CD8-positive, alpha-beta T cell (primary cell): ENCODE measurements at regions of chr19 and their contacts with region 1.

Region 1: GRCh38 chr19:39532233-39533002 is at the start of gene EID2B:
- DNase-seq: peak; percentile 83 to 98 (median 96)
- ATAC-seq: peak; percentile 98
- H3K4me3 ChIP-seq: peak within 1 kb of the TSS; percentile 77 to 93
- H3K4me3 Mint-ChIP-seq: peak within 1 kb of the TSS; percentile 93
- H3K27ac ChIP-seq: peak within 1 kb of the TSS; percentile 69 to 80
- H3K27ac Mint-ChIP-seq: peak within 1 kb of the TSS; percentile 87
- H3K4me1 ChIP-seq: peaks cover 9% of the 10 kb centered on the region
- H3K4me1 Mint-ChIP-seq: peaks cover 31% of the 10 kb centered on the region
- H3K27me3 ChIP-seq: no peaks in the 10 kb centered on the region
- H3K27me3 Mint-ChIP-seq: no peaks in the 10 kb centered on the region
- CTCF ChIP-seq: peak; percentile 99
- total RNA-seq, gene EID2B: 3.5 to 3.7 TPM

Region 2: GRCh38 chr19:39328046-39328705 is 204.2 kb before region 1 on chr19:
- CTCF ChIA-PET with region 1: no interaction called
- POLR2A ChIA-PET with region 1: no interaction called
- intact Hi-C with region 1: loop called in 1 of 2 experiments (anchors 1 kb)
- DNase-seq: peak; percentile 71 to 90 (median 81)
- ATAC-seq: peak; percentile 93
- H3K4me3 ChIP-seq: no peak overlapping the region
- H3K4me3 Mint-ChIP-seq: peak overlapping the region; percentile 47
- H3K27ac ChIP-seq: no peak overlapping the region
- H3K27ac Mint-ChIP-seq: peak overlapping the region; percentile 71
- H3K4me1 ChIP-seq: peaks cover 52% of the 10 kb centered on the region
- H3K4me1 Mint-ChIP-seq: peaks cover 49% of the 10 kb centered on the region
- H3K27me3 ChIP-seq: no peaks in the 10 kb centered on the region
- H3K27me3 Mint-ChIP-seq: no peaks in the 10 kb centered on the region
- CTCF ChIP-seq: peak; percentile 96

Region 3: DNA sequence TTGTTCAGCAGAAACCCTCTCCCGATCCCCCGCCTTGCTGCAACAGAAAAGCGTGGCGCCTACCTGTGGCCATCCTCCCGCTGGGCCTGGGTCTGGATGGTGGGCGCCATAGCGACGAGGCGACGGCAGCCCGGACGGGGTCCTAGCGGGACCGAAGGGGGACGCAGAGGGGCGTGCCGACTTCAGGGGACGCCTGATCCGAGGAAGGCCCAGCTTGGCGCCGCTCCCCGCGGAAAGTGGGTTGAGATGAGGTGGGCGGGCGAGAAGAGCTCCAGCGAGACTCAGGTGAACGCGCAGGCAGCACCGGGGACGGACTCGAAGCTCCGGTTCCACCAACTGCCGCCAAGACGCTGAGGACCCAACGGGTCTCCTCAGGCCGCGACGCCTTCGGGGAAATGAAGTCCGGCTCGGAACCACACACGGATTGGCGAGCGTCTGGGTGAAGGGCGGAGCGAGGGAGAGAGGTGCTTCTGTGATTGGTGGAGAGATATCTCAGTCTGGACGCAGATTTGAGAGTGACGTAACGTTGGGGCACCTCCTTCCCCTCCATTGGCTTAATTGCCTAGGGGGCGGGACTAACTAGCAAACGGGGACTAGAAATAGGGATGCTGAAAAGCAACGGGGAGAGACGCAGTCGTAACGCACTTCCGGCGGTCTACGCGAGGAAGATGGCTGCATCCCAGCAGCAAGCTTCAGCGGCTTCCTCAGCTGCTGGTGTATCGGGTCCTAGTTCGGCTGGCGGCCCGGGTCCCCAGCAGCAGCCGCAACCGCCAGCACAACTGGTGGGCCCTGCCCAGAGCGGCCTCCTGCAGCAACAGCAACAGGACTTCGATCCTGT is 141.4 kb before region 1 on chr19 and contains the starts of genes MED29 and PAF1:
- CTCF ChIA-PET with region 1: no interaction called
- POLR2A ChIA-PET with region 1: interaction called, 3 read pairs
- intact Hi-C with region 1: loop called (anchors 2 kb)
- DNase-seq: peak; percentile 89 to 100 (median 94)
- ATAC-seq: peak; percentile 87
- H3K4me3 ChIP-seq: peak within 1 kb of the TSS; percentile 86 to 95
- H3K4me3 Mint-ChIP-seq: peak within 1 kb of the TSS; percentile 96
- H3K27ac ChIP-seq: peak within 1 kb of the TSS; percentile 99
- H3K27ac Mint-ChIP-seq: peak within 1 kb of the TSS; percentile 100
- H3K4me1 ChIP-seq: peaks cover 19% of the 10 kb centered on the region
- H3K4me1 Mint-ChIP-seq: peaks cover 37% of the 10 kb centered on the region
- H3K27me3 ChIP-seq: no peaks in the 10 kb centered on the region
- H3K27me3 Mint-ChIP-seq: no peaks in the 10 kb centered on the region
- CTCF ChIP-seq: no peak
- total RNA-seq, gene MED29: 45.9 to 55.1 TPM
- total RNA-seq, gene PAF1: 109 to 117 TPM

Region 4: DNA sequence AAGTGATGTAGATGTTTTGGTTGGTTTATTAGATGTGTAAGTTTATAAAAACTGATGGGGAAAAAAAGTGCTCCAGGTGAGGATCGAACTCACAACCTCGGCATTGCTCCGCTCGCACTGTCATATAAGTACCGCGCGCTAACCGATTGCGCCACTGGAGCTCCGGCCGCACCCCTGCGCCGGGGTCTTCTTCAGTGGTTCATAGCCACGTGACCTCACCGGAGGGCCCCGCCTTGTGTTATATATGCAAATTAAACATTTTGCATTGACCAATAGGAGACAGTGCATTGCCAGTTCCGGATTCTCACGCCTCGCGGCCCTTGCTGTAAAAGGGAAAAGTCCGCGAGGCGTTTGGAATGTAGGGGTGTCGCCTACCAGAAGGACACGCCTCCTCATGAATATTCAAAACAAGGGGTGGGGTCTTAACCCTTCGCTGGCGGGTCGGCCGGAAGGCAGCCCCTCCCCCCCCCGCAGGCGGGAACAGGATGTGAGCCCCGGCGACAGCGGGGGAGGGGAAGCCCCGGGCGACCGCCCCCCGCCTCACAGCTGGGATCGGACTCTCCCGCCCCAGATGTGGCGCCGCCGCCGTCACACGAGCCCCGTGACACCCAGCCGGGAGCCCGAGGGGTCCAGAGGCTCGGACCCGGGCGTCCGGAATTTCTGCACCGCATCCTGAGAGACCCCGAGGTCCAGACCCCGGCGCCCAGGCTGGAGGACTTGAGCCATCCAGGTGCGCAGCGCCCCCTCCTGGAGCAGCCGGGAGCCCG is 120.1 kb before region 1 on chr19 and contains the start of gene PLEKHG2:
- CTCF ChIA-PET with region 1: interaction called, 4 read pairs
- POLR2A ChIA-PET with region 1: no interaction called
- intact Hi-C with region 1: loop called in 1 of 2 experiments (anchors 1 kb)
- DNase-seq: peak; percentile 95 to 99 (median 97)
- ATAC-seq: peak; percentile 57
- H3K4me3 ChIP-seq: peak within 1 kb of the TSS; percentile 95
- H3K4me3 Mint-ChIP-seq: peak within 1 kb of the TSS; percentile 89
- H3K27ac ChIP-seq: peak within 1 kb of the TSS; percentile 94 to 100
- H3K27ac Mint-ChIP-seq: peak within 1 kb of the TSS; percentile 96
- H3K4me1 ChIP-seq: peaks cover 26% of the 10 kb centered on the region
- H3K4me1 Mint-ChIP-seq: peaks cover 33% of the 10 kb centered on the region
- H3K27me3 ChIP-seq: no peaks in the 10 kb centered on the region
- H3K27me3 Mint-ChIP-seq: no peaks in the 10 kb centered on the region
- CTCF ChIP-seq: peak; percentile 84
- total RNA-seq, gene PLEKHG2: 54.8 to 69.0 TPM

Region 5: DNA sequence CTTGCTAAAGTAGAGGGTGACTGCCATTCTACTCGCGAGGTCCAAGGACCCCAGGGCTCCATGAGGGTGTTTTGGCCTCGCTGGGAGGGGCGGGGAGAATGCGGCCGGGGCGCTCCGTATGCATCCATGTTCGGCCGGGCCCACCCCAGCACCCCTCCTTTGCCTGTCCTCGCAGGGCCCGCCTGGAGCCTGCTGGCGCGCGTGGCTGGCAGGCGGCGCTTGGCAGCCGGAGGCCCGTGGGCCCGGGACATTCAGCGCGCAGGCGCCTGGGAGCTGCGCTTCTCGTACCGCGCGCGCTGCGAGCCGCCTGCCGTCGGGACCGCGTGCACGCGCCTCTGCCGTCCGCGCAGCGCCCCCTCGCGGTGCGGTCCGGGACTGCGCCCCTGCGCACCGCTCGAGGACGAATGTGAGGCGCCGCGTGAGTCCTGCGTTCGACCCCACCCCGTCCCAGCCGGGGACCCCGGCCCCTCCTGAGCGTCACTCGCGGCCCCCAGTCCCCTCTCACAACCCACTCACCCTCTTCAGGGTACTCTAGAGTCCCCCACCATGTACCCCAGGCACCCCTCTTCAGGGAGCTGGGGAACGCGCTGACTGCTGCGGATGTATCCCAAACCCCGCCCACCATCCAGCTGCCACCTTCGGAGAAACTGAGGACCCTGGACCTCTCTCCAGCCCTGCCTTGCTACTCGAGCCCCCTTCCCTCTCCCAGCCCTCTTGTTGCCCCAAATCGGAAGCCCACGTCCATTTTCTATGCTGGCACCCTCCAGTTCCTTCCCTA is 29.6 kb before region 1 on chr19:
- CTCF ChIA-PET with region 1: interaction called, 3 read pairs
- POLR2A ChIA-PET with region 1: no interaction called
- intact Hi-C with region 1: loop called in 1 of 2 experiments (anchors 2 kb)
- DNase-seq: peak; percentile 51 to 91 (median 78)
- ATAC-seq: peak; percentile 79
- H3K4me3 ChIP-seq: no peak overlapping the region
- H3K4me3 Mint-ChIP-seq: no peak overlapping the region
- H3K27ac ChIP-seq: no peak overlapping the region
- H3K27ac Mint-ChIP-seq: no peak overlapping the region
- H3K4me1 ChIP-seq: peaks cover 27% of the 10 kb centered on the region
- H3K4me1 Mint-ChIP-seq: peaks cover 26% of the 10 kb centered on the region
- H3K27me3 ChIP-seq: peaks cover 23 to 50% of the 10 kb centered on the region in 2 experiments
- H3K27me3 Mint-ChIP-seq: peaks cover 57% of the 10 kb centered on the region
- CTCF ChIP-seq: peak; percentile 89

Region 6: DNA sequence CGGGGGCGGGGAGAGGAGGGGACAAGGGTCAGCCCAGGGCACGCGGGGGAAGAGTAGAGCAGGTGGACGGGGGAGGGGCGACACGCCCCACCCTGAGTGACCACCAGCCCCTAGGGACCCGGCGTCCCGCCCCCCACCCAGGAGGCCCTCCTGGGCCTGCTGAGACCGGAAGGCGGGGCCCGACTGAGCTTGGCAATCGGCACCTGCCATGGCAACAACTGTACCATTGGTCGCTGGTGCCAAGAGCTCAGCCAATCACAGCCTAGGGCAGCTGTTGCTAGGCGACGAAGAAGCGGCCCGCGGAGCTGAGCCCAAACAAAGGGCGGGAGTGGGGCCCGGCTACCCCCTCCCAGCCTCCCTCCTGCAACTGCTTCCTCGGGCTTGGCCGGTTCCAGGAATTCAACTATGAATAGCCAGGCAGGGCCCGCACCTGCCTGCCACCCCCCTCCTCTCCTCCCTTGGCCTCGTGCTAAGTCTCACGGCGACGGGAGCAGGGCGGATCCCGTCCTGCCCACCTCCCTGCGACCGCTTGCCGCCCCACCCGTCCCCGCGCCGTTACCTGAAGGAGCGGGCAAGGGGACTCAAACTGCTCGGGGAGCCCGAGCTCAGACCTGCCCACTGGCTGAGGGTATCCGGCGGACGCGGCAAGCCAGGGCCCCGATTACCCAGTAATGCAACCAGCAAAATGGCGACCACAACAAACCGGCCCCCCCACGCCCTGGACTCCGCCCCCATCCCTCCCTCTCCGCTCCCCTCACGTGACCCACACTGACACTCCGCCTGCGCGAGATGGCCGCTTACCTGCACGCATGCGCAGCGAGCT is 301.3 kb after region 1 on chr19 and contains the start of gene DYRK1B:
- CTCF ChIA-PET with region 1: no interaction called
- POLR2A ChIA-PET with region 1: no interaction called
- intact Hi-C with region 1: no loop called
- DNase-seq: peak; percentile 97 to 99 (median 98)
- ATAC-seq: peak; percentile 84
- H3K4me3 ChIP-seq: peak within 1 kb of the TSS; percentile 93 to 99
- H3K4me3 Mint-ChIP-seq: peak within 1 kb of the TSS; percentile 75
- H3K27ac ChIP-seq: peak within 1 kb of the TSS; percentile 96 to 99
- H3K27ac Mint-ChIP-seq: peak within 1 kb of the TSS; percentile 90
- H3K4me1 ChIP-seq: peaks cover 23% of the 10 kb centered on the region
- H3K4me1 Mint-ChIP-seq: peaks cover 28% of the 10 kb centered on the region
- H3K27me3 ChIP-seq: no peaks in the 10 kb centered on the region
- H3K27me3 Mint-ChIP-seq: no peaks in the 10 kb centered on the region
- CTCF ChIP-seq: no peak
- total RNA-seq, gene DYRK1B: 19.0 to 22.6 TPM